CD4-positive, alpha-beta memory T cell (primary cell): ENCODE measurements at regions of chr17 and their contacts with region 1.

Region 1: GRCh38 chr17:68435876-68436842 is 21.1 kb downstream of the WIPI1 start:
- DNase-seq: peak; percentile 82 to 84 (median 83)
- H3K4me3 ChIP-seq: no peak overlapping the region
- H3K4me3 Mint-ChIP-seq: peak overlapping the region in 7 of 8 donors; percentile 36 to 91 (median 67)
- H3K27ac ChIP-seq: no peak overlapping the region
- H3K27ac Mint-ChIP-seq: peak overlapping the region; percentile 79 to 97 (median 88)
- H3K4me1 ChIP-seq: peaks cover 51% of the 10 kb centered on the region
- H3K4me1 Mint-ChIP-seq: peaks cover 37 to 60% (median 45%) of the 10 kb centered on the region in 4 donors
- H3K27me3 ChIP-seq: no peaks in the 10 kb centered on the region
- H3K27me3 Mint-ChIP-seq: no peaks in the 10 kb centered on the region

Region 2: GRCh38 chr17:68172461-68172954 is 263.7 kb before region 1 on chr17:
- CTCF ChIA-PET with region 1: interaction called, 11 read pairs
- POLR2A ChIA-PET with region 1: interaction called, 5 read pairs
- intact Hi-C with region 1: loop called (anchors 1 kb)
- DNase-seq: peak; percentile 67 to 78 (median 68)
- H3K4me3 ChIP-seq: no peak overlapping the region
- H3K4me3 Mint-ChIP-seq: no peak overlapping the region
- H3K27ac ChIP-seq: no peak overlapping the region
- H3K27ac Mint-ChIP-seq: no peak overlapping the region
- H3K4me1 ChIP-seq: peaks cover 3% of the 10 kb centered on the region
- H3K4me1 Mint-ChIP-seq: peaks cover 8 to 17% (median 10%) of the 10 kb centered on the region in 4 donors
- H3K27me3 ChIP-seq: no peaks in the 10 kb centered on the region
- H3K27me3 Mint-ChIP-seq: no peaks in the 10 kb centered on the region

Region 3: DNA sequence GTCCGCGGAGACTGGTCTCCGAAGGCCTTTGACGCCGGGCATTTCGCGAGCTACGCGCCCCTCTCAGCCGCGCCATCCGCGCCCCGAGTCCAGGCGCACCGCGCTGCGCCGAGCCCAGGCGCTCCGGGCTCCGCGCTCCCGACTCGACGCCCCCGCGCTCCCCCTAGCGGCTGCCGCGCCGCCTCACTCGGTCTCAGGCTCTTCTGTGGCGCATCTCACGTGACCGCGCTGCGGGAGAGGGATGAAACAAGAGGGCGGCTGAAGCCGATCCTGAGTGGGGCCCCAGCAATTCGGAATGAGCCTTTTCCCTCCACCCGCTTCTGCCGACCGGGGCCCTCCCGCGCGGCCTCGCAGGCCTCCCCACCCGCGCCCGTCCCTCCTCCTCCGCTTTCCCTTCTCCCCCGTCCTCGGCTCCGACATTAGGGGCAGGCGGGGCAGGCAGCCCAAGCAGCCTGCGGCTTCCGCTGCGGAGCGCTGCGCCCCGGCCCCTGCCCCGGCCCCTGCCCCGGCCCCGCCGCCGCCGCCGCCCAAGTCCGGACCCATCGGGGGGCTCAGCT is 230.8 kb before region 1 on chr17:
- CTCF ChIA-PET with region 1: interaction called, 6 read pairs
- POLR2A ChIA-PET with region 1: interaction called, 18 read pairs
- intact Hi-C with region 1: loop called (anchors 1 kb)
- DNase-seq: peak; percentile 88 to 94 (median 89)
- H3K4me3 ChIP-seq: peak overlapping the region in 1 of 2 donors; percentile 65
- H3K4me3 Mint-ChIP-seq: peak overlapping the region; percentile 79 to 93 (median 89)
- H3K27ac ChIP-seq: peak overlapping the region; percentile 72
- H3K27ac Mint-ChIP-seq: peak overlapping the region; percentile 74 to 94 (median 92)
- H3K4me1 ChIP-seq: peaks cover 43% of the 10 kb centered on the region
- H3K4me1 Mint-ChIP-seq: peaks cover 20 to 49% (median 33%) of the 10 kb centered on the region in 4 donors
- H3K27me3 ChIP-seq: no peaks in the 10 kb centered on the region
- H3K27me3 Mint-ChIP-seq: no peaks in the 10 kb centered on the region

Region 4: DNA sequence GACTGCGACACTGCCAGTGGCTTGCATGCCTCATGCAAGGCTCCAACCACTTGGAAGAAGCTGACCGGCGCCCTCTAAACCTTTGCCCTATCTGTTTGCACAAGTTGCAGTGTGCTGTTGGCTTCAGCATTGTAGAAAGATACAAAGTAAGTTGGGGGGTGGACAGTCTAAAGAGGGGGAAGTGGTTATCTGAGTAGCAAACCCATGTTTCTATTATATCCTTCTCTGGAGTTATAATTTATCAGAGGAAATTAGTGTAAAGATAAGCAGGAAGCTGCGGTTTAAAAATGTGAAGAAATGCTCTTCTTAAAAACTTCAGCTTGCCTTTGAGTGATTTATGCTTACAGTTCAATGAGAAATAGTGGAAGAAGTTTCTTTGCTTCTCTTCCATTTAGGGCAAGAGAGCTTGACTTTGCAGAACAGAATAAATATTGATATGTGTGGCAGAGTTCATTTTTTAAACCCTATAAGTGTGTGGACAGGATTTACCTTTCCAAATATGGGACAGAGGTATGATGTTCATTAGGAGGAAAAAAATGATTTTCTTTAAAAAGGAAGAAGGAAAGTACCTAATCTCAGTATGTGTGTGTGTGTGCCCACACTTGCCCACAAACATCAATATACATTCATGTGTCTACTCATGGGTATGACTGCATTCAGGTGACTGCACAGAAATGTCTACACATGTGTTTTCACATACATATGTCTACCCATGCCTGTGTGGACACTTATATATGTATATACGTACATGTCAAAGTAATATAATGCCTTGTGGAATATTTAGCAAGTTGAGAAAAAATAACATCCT is 180.2 kb before region 1 on chr17:
- CTCF ChIA-PET with region 1: interaction called, 181 read pairs
- POLR2A ChIA-PET with region 1: interaction called, 8 read pairs
- intact Hi-C with region 1: no loop called
- DNase-seq: peak; percentile 50 to 73 (median 60)
- H3K4me3 ChIP-seq: no peak overlapping the region
- H3K4me3 Mint-ChIP-seq: peak overlapping the region; percentile 46 to 73 (median 66)
- H3K27ac ChIP-seq: peak overlapping the region; percentile 88
- H3K27ac Mint-ChIP-seq: peak overlapping the region; percentile 81 to 99 (median 98)
- H3K4me1 ChIP-seq: peaks cover 86% of the 10 kb centered on the region
- H3K4me1 Mint-ChIP-seq: peaks cover 61 to 85% (median 72%) of the 10 kb centered on the region in 4 donors
- H3K27me3 ChIP-seq: no peaks in the 10 kb centered on the region
- H3K27me3 Mint-ChIP-seq: no peaks in the 10 kb centered on the region

Region 5: GRCh38 chr17:68356520-68356919 is 79.6 kb before region 1 on chr17:
- CTCF ChIA-PET with region 1: interaction called, 22 read pairs
- POLR2A ChIA-PET with region 1: interaction called, 4 read pairs
- intact Hi-C with region 1: loop called (anchors 1 kb)
- DNase-seq: peak; percentile 81 to 86 (median 83)
- H3K4me3 ChIP-seq: peak overlapping the region in 1 of 2 donors; percentile 21
- H3K4me3 Mint-ChIP-seq: peak overlapping the region; percentile 72 to 90 (median 78)
- H3K27ac ChIP-seq: peak overlapping the region; percentile 41
- H3K27ac Mint-ChIP-seq: peak overlapping the region; percentile 77 to 94 (median 92)
- H3K4me1 ChIP-seq: peaks cover 63% of the 10 kb centered on the region
- H3K4me1 Mint-ChIP-seq: peaks cover 37 to 70% (median 54%) of the 10 kb centered on the region in 4 donors
- H3K27me3 ChIP-seq: no peaks in the 10 kb centered on the region
- H3K27me3 Mint-ChIP-seq: no peaks in the 10 kb centered on the region

Region 6: DNA sequence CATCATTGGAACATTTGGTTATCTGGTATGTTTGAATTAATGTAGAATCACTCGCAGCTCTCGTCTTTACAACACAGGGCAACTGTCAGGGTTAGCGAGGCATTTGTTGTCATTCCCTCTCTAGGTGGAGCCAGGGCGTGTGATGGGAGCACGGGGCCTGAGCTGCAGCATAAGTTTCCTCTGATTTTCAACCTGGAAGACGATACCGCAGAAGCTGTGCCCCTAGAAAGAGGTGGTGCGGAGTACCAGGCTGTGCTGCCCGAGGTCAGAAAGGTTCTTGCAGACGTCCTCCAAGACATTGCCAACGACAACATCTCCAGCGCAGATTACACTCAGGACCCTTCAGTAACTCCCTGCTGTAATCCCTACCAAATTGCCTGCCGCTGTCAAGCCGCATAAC is 16.1 kb before region 1 on chr17:
- CTCF ChIA-PET with region 1: interaction called, 27 read pairs
- POLR2A ChIA-PET with region 1: interaction called, 10 read pairs
- intact Hi-C with region 1: loop called (anchors 2 kb)
- DNase-seq: no peak
- H3K4me3 ChIP-seq: no peak overlapping the region
- H3K4me3 Mint-ChIP-seq: no peak overlapping the region
- H3K27ac ChIP-seq: no peak overlapping the region
- H3K27ac Mint-ChIP-seq: no peak overlapping the region
- H3K4me1 ChIP-seq: peaks cover 4% of the 10 kb centered on the region
- H3K4me1 Mint-ChIP-seq: peaks cover 5 to 23% (median 15%) of the 10 kb centered on the region in 4 donors
- H3K27me3 ChIP-seq: no peaks in the 10 kb centered on the region
- H3K27me3 Mint-ChIP-seq: no peaks in the 10 kb centered on the region

Region 7: GRCh38 chr17:68527323-68527722 is 91.2 kb after region 1 on chr17:
- CTCF ChIA-PET with region 1: no interaction called
- POLR2A ChIA-PET with region 1: no interaction called
- intact Hi-C with region 1: no loop called
- DNase-seq: no peak
- H3K4me3 ChIP-seq: no peak overlapping the region
- H3K4me3 Mint-ChIP-seq: no peak overlapping the region
- H3K27ac ChIP-seq: no peak overlapping the region
- H3K27ac Mint-ChIP-seq: no peak overlapping the region
- H3K4me1 ChIP-seq: no peaks in the 10 kb centered on the region
- H3K4me1 Mint-ChIP-seq: peaks cover 5 to 8% (median 7%) of the 10 kb centered on the region in 4 donors
- H3K27me3 ChIP-seq: no peaks in the 10 kb centered on the region
- H3K27me3 Mint-ChIP-seq: no peaks in the 10 kb centered on the region

Region 8: DNA sequence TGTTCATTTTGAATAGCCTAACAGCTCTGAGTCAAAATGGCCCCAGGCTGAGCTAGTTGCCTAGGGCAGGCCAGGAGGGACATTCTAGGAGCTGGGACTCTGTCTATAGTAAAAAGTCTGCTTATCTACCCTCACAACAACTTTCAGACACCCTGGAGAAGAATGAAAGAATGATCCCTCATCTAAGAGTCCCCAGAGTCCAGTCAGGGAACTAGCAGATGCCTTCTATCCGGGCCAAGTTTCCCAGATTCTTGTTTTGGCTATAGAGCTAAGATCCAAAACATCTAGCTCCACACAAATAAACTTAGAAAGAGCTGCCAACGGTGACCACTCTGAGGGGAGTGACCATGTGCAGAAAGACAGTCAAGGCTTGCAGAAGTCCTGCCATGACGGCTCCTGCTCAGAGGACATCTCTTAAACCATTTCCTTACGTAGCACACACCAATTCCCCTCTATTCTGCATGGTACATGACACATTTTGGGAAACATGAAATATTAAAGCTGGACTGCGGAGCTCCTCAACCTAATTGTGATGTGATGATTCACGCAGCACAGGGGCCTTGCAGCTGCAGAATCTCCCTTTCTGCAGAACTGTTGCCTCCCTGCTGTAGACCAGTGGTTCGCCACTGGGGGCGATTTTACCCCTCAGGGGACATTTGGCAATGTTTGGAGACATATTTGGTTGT is 140.8 kb after region 1 on chr17:
- CTCF ChIA-PET with region 1: no interaction called
- POLR2A ChIA-PET with region 1: no interaction called
- intact Hi-C with region 1: no loop called
- DNase-seq: no peak
- H3K4me3 ChIP-seq: no peak overlapping the region
- H3K4me3 Mint-ChIP-seq: no peak overlapping the region
- H3K27ac ChIP-seq: no peak overlapping the region
- H3K27ac Mint-ChIP-seq: no peak overlapping the region
- H3K4me1 ChIP-seq: no peaks in the 10 kb centered on the region
- H3K4me1 Mint-ChIP-seq: no peaks in the 10 kb centered on the region
- H3K27me3 ChIP-seq: no peaks in the 10 kb centered on the region
- H3K27me3 Mint-ChIP-seq: peaks cover 0 to 12% of the 10 kb centered on the region in 2 donors

Region 9: DNA sequence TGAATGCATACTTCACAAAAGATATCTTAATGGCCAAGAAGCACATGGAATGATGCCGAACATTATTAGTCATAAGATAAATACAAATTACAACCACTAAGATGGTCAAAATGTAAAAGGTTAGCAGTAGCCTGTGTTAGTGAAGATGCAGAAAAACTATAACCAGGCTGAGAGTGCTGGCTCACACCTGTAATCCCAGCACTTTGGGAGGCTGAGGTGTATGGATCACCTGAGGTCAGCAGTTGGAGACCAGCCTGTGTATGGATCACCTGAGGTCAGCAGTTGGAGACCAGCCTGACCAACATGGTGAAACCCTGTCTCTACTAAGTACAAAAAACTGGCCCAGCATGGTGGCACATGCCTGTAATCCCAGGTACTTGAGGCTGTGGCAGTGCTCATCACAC is 210.5 kb after region 1 on chr17:
- CTCF ChIA-PET with region 1: no interaction called
- POLR2A ChIA-PET with region 1: no interaction called
- intact Hi-C with region 1: no loop called
- DNase-seq: no peak
- H3K4me3 ChIP-seq: no peak overlapping the region
- H3K4me3 Mint-ChIP-seq: no peak overlapping the region
- H3K27ac ChIP-seq: no peak overlapping the region
- H3K27ac Mint-ChIP-seq: no peak overlapping the region
- H3K4me1 ChIP-seq: no peaks in the 10 kb centered on the region
- H3K4me1 Mint-ChIP-seq: no peaks in the 10 kb centered on the region
- H3K27me3 ChIP-seq: peaks cover 4% of the 10 kb centered on the region
- H3K27me3 Mint-ChIP-seq: peaks cover 19 to 22% of the 10 kb centered on the region in 2 donors

Region 10: DNA sequence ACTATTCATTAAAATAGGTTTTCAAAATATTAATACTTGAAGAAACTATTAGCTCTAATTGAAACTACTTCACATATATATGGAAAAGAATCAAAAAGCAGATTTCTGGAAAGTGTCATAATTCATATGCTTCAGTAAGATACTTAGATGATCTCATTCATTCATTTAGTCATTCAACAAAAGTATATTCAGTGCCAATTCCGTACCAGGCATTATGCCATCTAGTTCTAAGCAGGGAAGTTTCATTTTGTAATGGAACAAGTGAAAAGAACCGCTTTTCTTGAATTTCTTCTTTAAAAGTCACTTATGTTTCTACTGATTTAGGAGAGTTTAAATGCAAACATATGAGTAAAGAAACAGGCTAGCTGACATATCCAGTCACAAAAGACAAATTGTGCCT is 283.3 kb after region 1 on chr17:
- CTCF ChIA-PET with region 1: no interaction called
- POLR2A ChIA-PET with region 1: no interaction called
- intact Hi-C with region 1: no loop called
- DNase-seq: no peak
- H3K4me3 ChIP-seq: no peak overlapping the region
- H3K4me3 Mint-ChIP-seq: no peak overlapping the region
- H3K27ac ChIP-seq: no peak overlapping the region
- H3K27ac Mint-ChIP-seq: no peak overlapping the region
- H3K4me1 ChIP-seq: no peaks in the 10 kb centered on the region
- H3K4me1 Mint-ChIP-seq: no peaks in the 10 kb centered on the region
- H3K27me3 ChIP-seq: peaks cover 3% of the 10 kb centered on the region
- H3K27me3 Mint-ChIP-seq: peaks cover 13 to 22% of the 10 kb centered on the region in 2 donors